ENCODE measurements at regions of chr2 and their contacts with region 1.

Region 1: GRCh38 chr2:219155054-219155644 is 5.5 kb downstream of the NHEJ1 start:
- DNase-seq: peak; percentile 24
- ATAC-seq: peak; percentile 40
- H3K4me3 Mint-ChIP-seq: no peak overlapping the region
- H3K27ac Mint-ChIP-seq: no peak overlapping the region
- H3K4me1 Mint-ChIP-seq: peaks cover 10% of the 10 kb centered on the region
- H3K27me3 Mint-ChIP-seq: no peaks in the 10 kb centered on the region
- CTCF ChIP-seq: peak; percentile 53

Region 2: GRCh38 chr2:218898109-218898878 is 256.9 kb before region 1 on chr2:
- CTCF ChIA-PET with region 1: no interaction called
- POLR2A ChIA-PET with region 1: no interaction called
- DNase-seq: peak; percentile 94
- ATAC-seq: peak; percentile 72
- H3K4me3 Mint-ChIP-seq: peak overlapping the region; percentile 49
- H3K27ac Mint-ChIP-seq: no peak overlapping the region
- H3K4me1 Mint-ChIP-seq: peaks cover 24% of the 10 kb centered on the region
- H3K27me3 Mint-ChIP-seq: peaks cover 99% of the 10 kb centered on the region
- CTCF ChIP-seq: peak; percentile 98

Region 3: DNA sequence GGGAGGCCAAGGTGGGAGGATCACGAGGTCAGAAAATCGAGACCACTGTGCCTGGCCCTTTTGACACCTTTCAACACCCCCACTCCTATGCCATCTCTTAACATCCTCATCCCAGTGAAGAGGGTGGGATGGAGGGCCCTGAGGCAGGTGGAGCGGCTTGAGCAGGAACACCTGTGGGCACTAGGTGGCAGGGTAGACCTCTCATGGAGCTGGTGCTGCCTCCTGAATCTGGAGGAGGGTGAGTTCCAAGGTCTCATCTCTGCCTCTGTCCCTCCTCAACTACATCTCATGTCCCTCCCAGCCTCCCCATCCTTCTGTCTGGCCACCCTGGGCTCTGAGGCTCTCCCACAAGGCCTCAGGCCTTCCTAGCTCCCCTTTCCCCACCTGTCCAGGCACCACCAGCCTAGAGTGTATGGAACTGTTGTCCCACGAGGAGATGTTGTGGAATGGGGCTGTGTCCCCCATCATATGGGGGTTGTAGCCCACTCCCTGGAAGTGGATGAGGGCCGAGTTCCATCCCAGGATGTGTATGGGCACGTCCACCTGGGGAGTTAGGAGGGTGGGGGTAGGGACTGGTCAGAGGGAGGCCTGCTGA is 144.9 kb before region 1 on chr2:
- CTCF ChIA-PET with region 1: interaction called, 14 read pairs
- POLR2A ChIA-PET with region 1: no interaction called
- DNase-seq: peak; percentile 61
- ATAC-seq: peak; percentile 96
- H3K4me3 Mint-ChIP-seq: no peak overlapping the region
- H3K27ac Mint-ChIP-seq: no peak overlapping the region
- H3K4me1 Mint-ChIP-seq: no peaks in the 10 kb centered on the region
- H3K27me3 Mint-ChIP-seq: peaks cover 64% of the 10 kb centered on the region
- CTCF ChIP-seq: peak; percentile 43; the same call in 1 of the 2 replicates

Region 4: GRCh38 chr2:219041252-219041651 is 113.9 kb before region 1 on chr2 and contains the start of gene CFAP65:
- CTCF ChIA-PET with region 1: interaction called, 10 read pairs
- POLR2A ChIA-PET with region 1: no interaction called
- DNase-seq: peak; percentile 69
- ATAC-seq: peak; percentile 91
- H3K4me3 Mint-ChIP-seq: peak within 1 kb of the TSS; percentile 86
- H3K27ac Mint-ChIP-seq: 0 out of 2 replicates have a peak within 1 kb of the TSS, but pooled peaks have one; percentile 8
- H3K4me1 Mint-ChIP-seq: peaks cover 4% of the 10 kb centered on the region; the same call in 1 of the 2 replicates
- H3K27me3 Mint-ChIP-seq: peaks cover 30% of the 10 kb centered on the region
- CTCF ChIP-seq: no peak
- total RNA-seq, gene CFAP65: 0.44 to 1.0 TPM (median 0.48 TPM) in 3 replicates

Region 5: GRCh38 chr2:219125225-219125885 is 29.8 kb before region 1 on chr2:
- CTCF ChIA-PET with region 1: interaction called, 17 read pairs
- POLR2A ChIA-PET with region 1: no interaction called
- DNase-seq: no peak
- ATAC-seq: no peak
- H3K4me3 Mint-ChIP-seq: no peak overlapping the region
- H3K27ac Mint-ChIP-seq: no peak overlapping the region
- H3K4me1 Mint-ChIP-seq: peaks cover 18% of the 10 kb centered on the region
- H3K27me3 Mint-ChIP-seq: no peaks in the 10 kb centered on the region
- CTCF ChIP-seq: no peak

Region 6: DNA sequence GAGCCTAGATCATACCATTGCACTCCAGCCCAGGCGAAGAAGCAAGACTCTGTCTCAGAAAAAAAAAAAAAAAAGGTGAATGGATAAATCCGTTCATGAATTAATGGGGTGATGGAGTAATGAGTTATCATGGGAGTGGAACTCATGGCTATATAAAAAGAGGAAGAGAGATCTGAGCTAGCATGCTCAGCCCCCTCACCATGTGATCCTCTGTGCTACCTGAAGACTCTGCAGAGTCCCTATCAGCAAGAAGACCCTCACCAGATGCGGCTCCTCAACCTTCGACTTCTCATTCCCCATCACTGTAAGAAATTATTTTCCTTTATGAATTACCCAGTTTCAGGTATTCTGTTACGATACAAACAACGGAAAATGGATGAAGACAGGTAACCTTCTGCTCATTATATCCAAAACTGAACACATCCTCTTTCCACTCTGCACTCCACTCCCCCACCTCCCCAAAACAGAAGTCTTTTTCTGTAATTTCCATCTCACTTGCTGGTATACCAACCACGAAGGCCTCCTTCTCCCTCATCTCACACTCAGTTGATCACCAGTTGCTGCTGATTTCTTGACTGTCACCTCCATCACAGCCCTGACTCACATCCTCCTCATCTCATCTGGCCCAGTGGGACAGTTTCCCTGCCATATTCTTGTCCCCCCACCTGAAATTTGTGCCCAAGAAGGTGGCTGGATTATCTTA is 31.8 kb after region 1 on chr2:
- CTCF ChIA-PET with region 1: no interaction called
- POLR2A ChIA-PET with region 1: no interaction called
- DNase-seq: no peak
- ATAC-seq: no peak
- H3K4me3 Mint-ChIP-seq: no peak overlapping the region
- H3K27ac Mint-ChIP-seq: no peak overlapping the region; the same call in 1 of the 2 replicates
- H3K4me1 Mint-ChIP-seq: no peaks in the 10 kb centered on the region
- H3K27me3 Mint-ChIP-seq: peaks cover 3% of the 10 kb centered on the region; the same call in 1 of the 2 replicates
- CTCF ChIP-seq: no peak

Measured in WTC11 (cell line).